PC-9 (cell line): ENCODE measurements at regions of chr17 and their contacts with region 1.

Region 1: GRCh38 chr17:47882247-47882646 is 13.8 kb upstream of the SP2 start:
- DNase-seq: peak; percentile 50 to 70
- H3K4me3 ChIP-seq: no peak overlapping the region
- H3K27ac ChIP-seq: peak overlapping the region; percentile 91
- H3K4me1 ChIP-seq: peaks cover 94% of the 10 kb centered on the region
- H3K27me3 ChIP-seq: no peaks in the 10 kb centered on the region
- CTCF ChIP-seq: no peak

Region 2: GRCh38 chr17:47810205-47810821 is 71.9 kb before region 1 on chr17:
- CTCF ChIA-PET with region 1: no interaction called
- POLR2A ChIA-PET with region 1: interaction called, 3 read pairs
- intact Hi-C with region 1: loop called (anchors 2 kb)
- DNase-seq: peak; percentile 93 to 99
- H3K4me3 ChIP-seq: peak overlapping the region; percentile 12; the same call in 1 of the 2 replicates
- H3K27ac ChIP-seq: peak overlapping the region; percentile 97
- H3K4me1 ChIP-seq: peaks cover 40% of the 10 kb centered on the region
- H3K27me3 ChIP-seq: no peaks in the 10 kb centered on the region
- CTCF ChIP-seq: no peak

Region 3: DNA sequence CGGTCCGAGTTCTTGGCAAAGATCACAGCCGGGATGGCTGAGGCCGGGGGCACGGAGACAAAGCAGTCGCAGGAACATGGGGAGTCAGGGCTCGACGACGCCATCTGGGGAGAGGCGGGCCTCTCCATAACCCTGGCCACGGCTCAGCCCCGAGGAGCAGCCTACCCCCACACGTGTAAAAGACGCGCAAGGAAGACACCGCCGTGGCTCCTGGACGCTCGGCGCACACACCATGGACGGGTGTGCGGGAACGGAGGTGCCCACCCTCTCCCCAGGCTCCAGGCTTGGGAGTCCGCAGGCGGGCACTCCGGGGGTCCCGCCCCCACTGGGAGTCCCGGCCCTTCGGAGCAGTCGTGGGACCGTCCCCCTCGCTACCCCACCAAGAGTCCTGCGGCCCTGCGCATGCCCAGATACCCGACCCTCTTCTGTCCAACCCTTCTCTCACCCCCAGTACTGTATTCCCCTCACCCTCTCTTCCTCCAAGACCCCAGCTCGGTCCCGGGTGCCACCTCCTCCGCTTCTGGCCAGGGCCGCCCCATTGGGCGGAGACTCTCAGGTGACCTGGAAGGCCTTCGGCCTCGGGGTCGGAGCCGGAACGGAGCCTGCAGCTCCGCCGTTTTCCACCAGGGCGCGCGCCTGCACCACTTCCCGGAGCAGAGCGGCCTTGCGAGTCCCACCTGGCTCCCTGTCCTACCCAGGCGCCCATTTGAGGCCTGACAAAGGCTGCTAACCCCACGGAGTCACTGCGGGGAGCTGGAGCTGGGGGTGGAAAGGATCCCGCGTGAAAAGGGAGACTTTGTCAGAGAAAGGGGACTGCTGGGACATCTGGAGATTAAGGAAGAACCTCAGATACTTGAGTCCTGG is 41.3 kb before region 1 on chr17 and contains the start of gene SCRN2:
- CTCF ChIA-PET with region 1: interaction called, 10 read pairs
- POLR2A ChIA-PET with region 1: interaction called, 4 read pairs
- intact Hi-C with region 1: loop called (anchors 1 kb)
- DNase-seq: peak; percentile 81 to 95
- H3K4me3 ChIP-seq: peak within 1 kb of the TSS; percentile 85
- H3K27ac ChIP-seq: peak within 1 kb of the TSS; percentile 23
- H3K4me1 ChIP-seq: peaks cover 60% of the 10 kb centered on the region
- H3K27me3 ChIP-seq: no peaks in the 10 kb centered on the region
- CTCF ChIP-seq: peak; percentile 100
- total RNA-seq, gene SCRN2: 31.7 and 43.9 TPM in 2 replicates

Region 4: GRCh38 chr17:47850692-47851573 is 31.3 kb before region 1 on chr17 and contains the start of gene SP6:
- CTCF ChIA-PET with region 1: no interaction called
- POLR2A ChIA-PET with region 1: interaction called, 6 read pairs
- intact Hi-C with region 1: loop called (anchors 1 kb)
- DNase-seq: peak; percentile 86 to 88
- H3K4me3 ChIP-seq: peak within 1 kb of the TSS; percentile 72
- H3K27ac ChIP-seq: peak within 1 kb of the TSS; percentile 55
- H3K4me1 ChIP-seq: peaks cover 33% of the 10 kb centered on the region
- H3K27me3 ChIP-seq: no peaks in the 10 kb centered on the region
- CTCF ChIP-seq: no peak; the same call in 1 of the 2 replicates
- total RNA-seq, gene SP6: 13.3 and 14.9 TPM in 2 replicates

Region 5: GRCh38 chr17:47862621-47863440 is 19.4 kb before region 1 on chr17:
- CTCF ChIA-PET with region 1: interaction called, 4 read pairs
- POLR2A ChIA-PET with region 1: interaction called, 4 read pairs
- intact Hi-C with region 1: loop called (anchors 1 kb)
- DNase-seq: peak; percentile 41 to 92
- H3K4me3 ChIP-seq: no peak overlapping the region
- H3K27ac ChIP-seq: peak overlapping the region; percentile 82
- H3K4me1 ChIP-seq: peaks cover 46% of the 10 kb centered on the region
- H3K27me3 ChIP-seq: no peaks in the 10 kb centered on the region
- CTCF ChIP-seq: no peak

Region 6: DNA sequence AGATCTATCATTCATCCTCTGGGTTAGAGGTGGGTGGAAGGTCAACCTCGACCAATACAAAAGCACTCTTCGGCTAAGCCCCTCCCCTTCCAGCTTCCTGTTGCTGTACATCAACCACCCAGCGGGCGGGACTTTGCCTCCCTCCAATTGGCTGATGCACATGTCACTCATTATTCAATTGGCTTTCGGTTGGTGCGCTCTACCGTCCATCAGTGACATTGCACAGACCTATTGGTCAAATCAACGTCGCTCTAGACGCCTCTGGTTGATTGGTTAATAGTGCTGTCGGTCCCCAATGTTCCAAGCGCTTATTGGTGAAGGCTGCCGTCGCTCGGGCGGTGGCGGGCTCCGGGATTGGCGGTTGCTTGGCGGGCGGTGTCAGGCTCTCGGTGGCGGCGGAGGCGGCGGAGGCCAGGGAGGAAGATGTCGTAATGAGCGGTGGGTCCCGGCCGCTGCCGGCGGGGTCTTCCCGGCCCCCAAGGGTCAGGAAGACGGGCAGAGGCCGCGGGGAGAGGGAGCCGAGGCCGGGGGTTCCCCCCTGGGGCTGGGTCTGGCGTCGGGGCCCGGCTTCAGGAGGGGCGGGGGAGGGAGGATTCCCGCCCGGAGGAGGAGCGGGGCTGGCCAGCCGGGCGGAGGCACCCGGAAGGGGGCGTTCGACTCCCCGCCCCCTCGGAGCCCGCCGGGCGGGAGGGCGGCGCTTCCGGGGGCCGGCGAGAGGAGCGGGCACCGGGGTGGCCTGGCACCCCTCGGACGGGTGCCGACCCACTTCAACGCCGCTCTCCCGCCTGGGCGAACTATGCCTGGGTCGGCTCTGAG is 13.8 kb after region 1 on chr17 and contains the start of gene SP2:
- CTCF ChIA-PET with region 1: no interaction called
- POLR2A ChIA-PET with region 1: interaction called, 10 read pairs
- intact Hi-C with region 1: no loop called
- DNase-seq: peak; percentile 99 to 100
- H3K4me3 ChIP-seq: peak within 1 kb of the TSS; percentile 93
- H3K27ac ChIP-seq: peak within 1 kb of the TSS; percentile 74
- H3K4me1 ChIP-seq: peaks cover 32% of the 10 kb centered on the region
- H3K27me3 ChIP-seq: no peaks in the 10 kb centered on the region
- CTCF ChIP-seq: peak; percentile 27; the same call in 1 of the 2 replicates
- total RNA-seq, gene SP2: 13.5 and 18.0 TPM in 2 replicates